Activated CD4-positive, alpha-beta T cell treated with anti-CD3 and anti-CD28 coated beads for 36 hours (primary cell): ENCODE measurements at regions of chr17 and their contacts with region 1.

Region 1: GRCh38 chr17:77404812-77405581 is 264.2 kb downstream of the SEC14L1 start:
- DNase-seq: peak; percentile 93
- ATAC-seq: peak; percentile 79
- H3K4me3 Mint-ChIP-seq: peak overlapping the region; percentile 95
- H3K27ac Mint-ChIP-seq: peak overlapping the region; percentile 89
- H3K4me1 Mint-ChIP-seq: peaks cover 95% of the 10 kb centered on the region
- H3K27me3 Mint-ChIP-seq: no peaks in the 10 kb centered on the region

Region 2: GRCh38 chr17:77356109-77356689 is 48.8 kb before region 1 on chr17:
- CTCF ChIA-PET with region 1: interaction called, 10 read pairs
- POLR2A ChIA-PET with region 1: no interaction called
- intact Hi-C with region 1: no loop called
- DNase-seq: no peak
- ATAC-seq: peak; percentile 43
- H3K4me3 Mint-ChIP-seq: no peak overlapping the region
- H3K27ac Mint-ChIP-seq: no peak overlapping the region
- H3K4me1 Mint-ChIP-seq: peaks cover 13% of the 10 kb centered on the region
- H3K27me3 Mint-ChIP-seq: no peaks in the 10 kb centered on the region

Region 3: DNA sequence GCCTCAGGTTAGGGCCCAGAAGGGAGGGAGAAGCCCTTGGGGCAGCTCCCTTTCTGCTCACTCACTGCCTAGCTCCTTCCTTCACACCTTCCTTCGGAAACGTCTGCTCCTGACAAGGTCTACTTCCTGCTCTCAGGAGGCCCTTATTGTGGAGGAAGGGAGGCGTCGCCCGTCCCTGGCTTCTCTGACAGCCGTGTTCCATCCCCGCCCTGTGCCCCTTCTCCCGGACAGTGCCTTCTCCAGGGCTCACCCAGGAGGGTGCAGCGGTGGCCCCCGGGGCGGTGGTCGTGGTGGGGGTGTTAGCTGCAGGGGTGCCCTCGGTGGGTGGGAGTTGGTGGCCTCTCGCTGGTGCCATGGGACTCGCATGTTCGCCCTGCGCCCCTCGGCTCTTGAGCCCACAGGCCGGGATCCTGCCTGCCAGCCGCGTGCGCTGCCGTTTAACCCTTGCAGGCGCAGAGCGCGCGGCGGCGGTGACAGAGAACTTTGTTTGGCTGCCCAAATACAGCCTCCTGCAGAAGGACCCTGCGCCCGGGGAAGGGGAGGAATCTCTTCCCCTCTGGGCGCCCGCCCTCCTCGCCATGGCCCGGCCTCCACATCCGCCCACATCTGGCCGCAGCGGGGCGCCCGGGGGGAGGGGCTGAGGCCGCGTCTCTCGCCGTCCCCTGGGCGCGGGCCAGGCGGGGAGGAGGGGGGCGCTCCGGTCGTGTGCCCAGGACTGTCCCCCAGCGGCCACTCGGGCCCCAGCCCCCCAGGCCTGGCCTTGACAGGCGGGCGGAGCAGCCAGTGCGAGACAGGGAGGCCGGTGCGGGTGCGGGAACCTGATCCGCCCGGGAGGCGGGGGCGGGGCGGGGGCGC is 32.3 kb before region 1 on chr17:
- CTCF ChIA-PET with region 1: interaction called, 23 read pairs
- POLR2A ChIA-PET with region 1: no interaction called
- intact Hi-C with region 1: loop called in 1 of 2 experiments (anchors 2 kb)
- DNase-seq: peak; percentile 78
- ATAC-seq: peak; percentile 17
- H3K4me3 Mint-ChIP-seq: peak overlapping the region; percentile 67
- H3K27ac Mint-ChIP-seq: peak overlapping the region; percentile 74
- H3K4me1 Mint-ChIP-seq: peaks cover 61% of the 10 kb centered on the region
- H3K27me3 Mint-ChIP-seq: no peaks in the 10 kb centered on the region

Region 4: GRCh38 chr17:77391668-77392375 is 13.2 kb before region 1 on chr17:
- CTCF ChIA-PET with region 1: interaction called, 66 read pairs
- POLR2A ChIA-PET with region 1: interaction called, 7 read pairs
- intact Hi-C with region 1: loop called in 1 of 2 experiments (anchors 2 kb)
- DNase-seq: peak; percentile 67
- ATAC-seq: peak; percentile 34
- H3K4me3 Mint-ChIP-seq: peak overlapping the region; percentile 78
- H3K27ac Mint-ChIP-seq: peak overlapping the region; percentile 58
- H3K4me1 Mint-ChIP-seq: peaks cover 71% of the 10 kb centered on the region
- H3K27me3 Mint-ChIP-seq: no peaks in the 10 kb centered on the region

Region 5: DNA sequence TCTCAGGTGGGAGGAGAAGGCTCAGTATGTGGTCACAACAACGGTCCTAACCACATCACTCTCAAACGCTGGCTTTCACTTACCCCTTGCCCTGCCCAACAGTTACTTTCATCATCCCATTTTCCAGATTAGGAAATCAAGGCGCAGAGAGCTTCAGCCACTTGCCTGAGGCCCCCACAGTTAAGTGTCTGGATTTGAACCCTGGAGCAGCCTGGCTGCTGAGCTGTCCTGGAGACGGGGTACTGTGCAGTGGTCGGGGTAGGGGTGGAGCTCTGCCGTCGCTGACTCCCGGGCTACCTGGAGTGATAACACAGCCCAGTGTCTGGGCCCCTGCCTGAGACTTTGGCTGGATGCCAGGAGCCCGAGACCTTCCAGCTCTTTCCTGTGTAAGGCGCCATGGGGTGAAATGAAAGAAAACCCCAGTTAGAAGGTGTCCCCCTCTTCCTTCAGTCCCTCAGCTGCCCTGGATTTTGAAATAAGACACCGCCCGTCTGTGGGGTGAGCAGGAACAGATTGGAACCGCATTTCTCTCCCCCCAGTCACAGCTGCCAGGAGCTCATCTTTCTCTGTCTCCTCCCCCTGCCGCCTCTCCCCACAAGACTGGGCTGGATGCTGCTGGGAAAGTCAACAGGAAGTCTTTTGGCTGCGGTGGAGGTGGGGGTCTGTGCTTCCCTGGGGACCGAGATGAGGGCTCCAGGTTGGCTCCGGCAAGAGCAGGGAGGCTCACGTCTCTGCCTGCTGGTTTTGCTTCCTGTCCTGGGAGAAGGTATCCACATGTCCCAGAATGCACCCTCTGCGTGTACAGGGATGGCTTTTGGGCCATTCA is 16.0 kb after region 1 on chr17:
- CTCF ChIA-PET with region 1: interaction called, 10 read pairs
- POLR2A ChIA-PET with region 1: interaction called, 3 read pairs
- intact Hi-C with region 1: no loop called
- DNase-seq: peak; percentile 71
- ATAC-seq: peak; percentile 59
- H3K4me3 Mint-ChIP-seq: peak overlapping the region; percentile 57
- H3K27ac Mint-ChIP-seq: peak overlapping the region; percentile 85
- H3K4me1 Mint-ChIP-seq: peaks cover 60% of the 10 kb centered on the region
- H3K27me3 Mint-ChIP-seq: no peaks in the 10 kb centered on the region

Region 6: GRCh38 chr17:77476931-77477877 is 72.2 kb after region 1 on chr17:
- CTCF ChIA-PET with region 1: interaction called, 10 read pairs
- POLR2A ChIA-PET with region 1: interaction called, 3 read pairs
- intact Hi-C with region 1: no loop called
- DNase-seq: peak; percentile 74
- ATAC-seq: peak; percentile 33
- H3K4me3 Mint-ChIP-seq: peak overlapping the region; percentile 24
- H3K27ac Mint-ChIP-seq: peak overlapping the region; percentile 80
- H3K4me1 Mint-ChIP-seq: peaks cover 78% of the 10 kb centered on the region
- H3K27me3 Mint-ChIP-seq: no peaks in the 10 kb centered on the region

Region 7: GRCh38 chr17:77494664-77495435 is 89.9 kb after region 1 on chr17:
- CTCF ChIA-PET with region 1: interaction called, 30 read pairs
- POLR2A ChIA-PET with region 1: no interaction called
- intact Hi-C with region 1: loop called in 1 of 2 experiments (anchors 1 kb)
- DNase-seq: peak; percentile 84
- ATAC-seq: peak; percentile 58
- H3K4me3 Mint-ChIP-seq: no peak overlapping the region
- H3K27ac Mint-ChIP-seq: peak overlapping the region; percentile 63
- H3K4me1 Mint-ChIP-seq: peaks cover 4% of the 10 kb centered on the region
- H3K27me3 Mint-ChIP-seq: no peaks in the 10 kb centered on the region